ENCODE measurements at regions of chr16 and their contacts with region 1.

Region 1: GRCh38 chr16:19086322-19087199 is 19.1 kb downstream of the COQ7 start:
- DNase-seq: peak; percentile 74
- H3K4me3 Mint-ChIP-seq: peak overlapping the region; percentile 43
- H3K27ac Mint-ChIP-seq: no peak overlapping the region
- H3K4me1 Mint-ChIP-seq: peaks cover 4% of the 10 kb centered on the region
- H3K27me3 Mint-ChIP-seq: peaks cover 10% of the 10 kb centered on the region

Region 2: DNA sequence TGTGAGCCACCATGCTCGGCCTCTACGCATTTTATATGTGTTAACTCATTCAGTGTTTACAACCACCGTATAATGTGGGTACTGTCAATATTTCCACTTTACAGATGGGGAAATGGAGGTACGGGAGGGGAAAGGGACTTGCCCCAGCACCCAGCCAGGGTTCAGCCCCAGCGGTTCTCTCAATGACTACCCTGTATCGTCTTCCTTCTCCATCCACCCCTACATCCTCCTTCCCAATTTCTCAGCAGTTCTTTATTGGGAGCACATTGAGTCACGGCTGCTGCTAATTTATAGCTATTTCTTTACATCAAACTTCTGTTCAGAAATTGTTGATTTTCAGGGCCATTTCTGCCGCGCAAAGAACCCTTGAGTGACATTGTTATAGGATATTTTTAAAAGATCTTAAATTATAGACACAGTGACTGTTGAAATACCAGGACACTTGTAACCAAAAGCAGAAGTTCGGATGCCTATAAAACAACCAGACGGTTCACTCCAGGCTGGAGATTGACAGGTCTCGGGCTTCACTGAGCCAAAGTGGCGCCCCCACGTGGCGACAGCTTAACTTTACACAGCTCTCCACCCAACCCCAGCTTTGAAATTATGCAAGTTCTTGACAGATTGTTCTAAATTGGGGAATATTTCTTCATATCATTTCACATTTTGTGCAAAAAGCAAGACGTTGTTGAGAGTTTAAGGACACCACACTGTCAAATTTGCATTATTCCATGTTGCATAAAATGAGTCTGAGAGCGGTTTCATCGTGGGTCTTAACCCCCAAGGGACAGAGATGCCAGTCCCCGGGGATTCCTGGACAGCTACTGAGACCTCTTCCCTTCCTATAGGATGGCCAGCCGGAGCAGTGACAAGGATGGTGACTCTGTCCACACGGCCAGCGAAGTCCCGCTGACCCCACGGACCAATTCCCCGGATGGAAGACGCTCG is 93.3 kb after region 1 on chr16:
- CTCF ChIA-PET with region 1: interaction called, 16 read pairs
- POLR2A ChIA-PET with region 1: no interaction called
- DNase-seq: peak; percentile 23
- H3K4me3 Mint-ChIP-seq: no peak overlapping the region
- H3K27ac Mint-ChIP-seq: no peak overlapping the region
- H3K4me1 Mint-ChIP-seq: no peaks in the 10 kb centered on the region
- H3K27me3 Mint-ChIP-seq: peaks cover 3% of the 10 kb centered on the region

Measured in activated CD4-positive, alpha-beta T cell treated with anti-CD3 and anti-CD28 coated beads, Interleukin-2, amount 10 ng/mL, durations not matched to agents 7 days and 5 days (primary cell).